ENCODE measurements at regions of chr12 and their contacts with region 1.

Region 1: GRCh38 chr12:89162704-89163261 is 189.5 kb downstream of the DUSP6 start:
- DNase-seq: peak; percentile 55
- H3K4me3 Mint-ChIP-seq: no peak overlapping the region
- H3K27ac Mint-ChIP-seq: no peak overlapping the region
- H3K4me1 Mint-ChIP-seq: peaks cover 27% of the 10 kb centered on the region
- H3K27me3 Mint-ChIP-seq: no peaks in the 10 kb centered on the region

Region 2: GRCh38 chr12:88035271-88035906 is 1127.4 kb before region 1 on chr12:
- intact Hi-C with region 1: loop called (anchors 10 kb)
- DNase-seq: peak; percentile 84
- H3K4me3 Mint-ChIP-seq: peak overlapping the region; percentile 99
- H3K27ac Mint-ChIP-seq: peak overlapping the region; percentile 95
- H3K4me1 Mint-ChIP-seq: peaks cover 45% of the 10 kb centered on the region
- H3K27me3 Mint-ChIP-seq: no peaks in the 10 kb centered on the region

Region 3: DNA sequence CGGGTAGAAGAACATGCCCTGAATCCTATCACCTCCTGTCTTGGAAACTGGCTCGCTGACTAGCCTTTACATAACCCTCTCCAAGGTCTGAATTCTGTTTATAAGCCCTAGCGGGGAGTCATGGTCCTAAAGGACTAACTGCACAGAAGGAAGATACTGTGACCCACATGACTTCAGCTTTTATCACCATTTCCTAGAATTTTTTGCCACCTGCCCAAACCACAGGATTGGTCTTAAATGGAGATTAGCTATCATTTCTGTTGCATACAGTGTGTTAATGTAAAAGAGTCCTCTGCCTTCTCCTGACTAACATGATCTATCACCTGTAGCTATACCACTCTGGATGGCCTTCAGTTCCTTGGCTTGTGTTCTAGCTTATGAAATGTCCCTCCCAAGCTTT is 129.7 kb before region 1 on chr12:
- intact Hi-C with region 1: no loop called
- DNase-seq: no peak
- H3K4me3 Mint-ChIP-seq: no peak overlapping the region
- H3K27ac Mint-ChIP-seq: no peak overlapping the region
- H3K4me1 Mint-ChIP-seq: peaks cover 55% of the 10 kb centered on the region
- H3K27me3 Mint-ChIP-seq: no peaks in the 10 kb centered on the region

Region 4: DNA sequence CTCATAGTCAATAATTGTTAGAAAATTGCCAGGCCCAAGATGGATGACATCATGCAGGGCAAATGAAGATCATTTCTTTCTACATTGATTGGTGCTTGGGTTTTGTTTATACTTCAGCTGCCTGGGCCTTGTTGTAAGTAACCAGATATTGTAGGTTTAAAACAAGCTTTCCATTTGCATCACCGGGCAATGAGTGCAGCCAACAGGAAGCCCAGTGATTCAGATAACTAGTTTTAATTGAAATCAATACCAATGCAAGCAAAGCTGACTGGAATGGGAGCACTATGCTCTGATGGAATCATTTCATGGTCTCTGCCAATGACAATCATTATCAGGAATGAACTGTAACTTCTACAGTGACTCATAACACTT is 89.8 kb before region 1 on chr12:
- intact Hi-C with region 1: loop called (anchors 2 kb)
- DNase-seq: no peak
- H3K4me3 Mint-ChIP-seq: no peak overlapping the region
- H3K27ac Mint-ChIP-seq: peak overlapping the region; percentile 44
- H3K4me1 Mint-ChIP-seq: peaks cover 29% of the 10 kb centered on the region
- H3K27me3 Mint-ChIP-seq: no peaks in the 10 kb centered on the region

Region 5: GRCh38 chr12:89225808-89226411 is 63.1 kb after region 1 on chr12:
- intact Hi-C with region 1: loop called (anchors 1 kb)
- DNase-seq: no peak
- H3K4me3 Mint-ChIP-seq: peak overlapping the region; percentile 70
- H3K27ac Mint-ChIP-seq: peak overlapping the region; percentile 100
- H3K4me1 Mint-ChIP-seq: peaks cover 67% of the 10 kb centered on the region
- H3K27me3 Mint-ChIP-seq: no peaks in the 10 kb centered on the region

Region 6: GRCh38 chr12:89333564-89334252 is 170.9 kb after region 1 on chr12:
- intact Hi-C with region 1: loop called (anchors 5 kb)
- DNase-seq: peak; percentile 47
- H3K4me3 Mint-ChIP-seq: peak overlapping the region; percentile 54
- H3K27ac Mint-ChIP-seq: peak overlapping the region; percentile 83
- H3K4me1 Mint-ChIP-seq: peaks cover 41% of the 10 kb centered on the region
- H3K27me3 Mint-ChIP-seq: no peaks in the 10 kb centered on the region

Region 7: DNA sequence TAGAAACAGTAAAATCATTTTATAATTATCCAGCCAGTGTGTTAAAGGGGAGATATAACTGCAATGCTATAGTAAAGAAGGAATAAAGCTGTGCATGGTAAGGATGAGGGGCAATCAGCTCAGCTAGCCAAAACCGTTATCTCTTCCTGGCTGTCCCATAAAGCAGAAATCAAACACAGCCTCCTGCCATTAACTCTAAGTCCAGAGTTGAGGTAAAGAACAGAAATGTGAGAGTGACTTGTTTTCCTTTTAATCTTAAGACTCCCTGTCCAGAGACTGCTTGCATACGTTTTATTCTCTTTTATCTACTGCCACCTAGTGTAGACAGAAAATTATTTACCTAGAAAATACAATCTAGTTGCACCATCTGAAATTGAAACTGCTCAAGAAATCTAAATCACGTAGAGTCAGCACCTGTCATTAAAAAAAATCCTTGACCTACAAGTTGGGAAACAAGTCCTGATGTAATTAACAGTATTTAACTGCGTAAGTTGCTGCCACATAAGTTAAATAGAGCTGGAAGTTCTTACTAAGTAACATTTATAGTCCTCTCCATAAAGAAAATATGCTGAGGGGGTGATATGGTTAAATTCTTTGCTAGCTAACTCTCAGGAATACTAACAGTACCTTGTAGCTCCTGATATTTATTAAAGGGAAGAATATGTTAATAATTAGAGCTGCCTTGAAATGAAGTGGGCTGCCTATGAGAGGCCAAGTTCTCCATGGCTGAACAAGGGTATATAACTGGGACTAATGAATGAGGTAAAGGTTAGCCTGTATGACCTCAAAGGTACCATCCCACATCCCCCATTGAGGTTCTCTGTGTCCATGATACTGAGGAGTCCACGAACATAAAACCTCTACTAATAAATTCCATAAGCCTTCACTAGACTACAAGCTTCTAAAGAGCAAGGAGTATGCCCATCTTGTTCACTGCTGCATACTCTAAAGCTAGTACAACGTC is 299.1 kb after region 1 on chr12:
- intact Hi-C with region 1: loop called (anchors 1 kb)
- DNase-seq: no peak
- H3K4me3 Mint-ChIP-seq: peak overlapping the region; percentile 60
- H3K27ac Mint-ChIP-seq: peak overlapping the region; percentile 66
- H3K4me1 Mint-ChIP-seq: peaks cover 55% of the 10 kb centered on the region
- H3K27me3 Mint-ChIP-seq: no peaks in the 10 kb centered on the region

Region 8: DNA sequence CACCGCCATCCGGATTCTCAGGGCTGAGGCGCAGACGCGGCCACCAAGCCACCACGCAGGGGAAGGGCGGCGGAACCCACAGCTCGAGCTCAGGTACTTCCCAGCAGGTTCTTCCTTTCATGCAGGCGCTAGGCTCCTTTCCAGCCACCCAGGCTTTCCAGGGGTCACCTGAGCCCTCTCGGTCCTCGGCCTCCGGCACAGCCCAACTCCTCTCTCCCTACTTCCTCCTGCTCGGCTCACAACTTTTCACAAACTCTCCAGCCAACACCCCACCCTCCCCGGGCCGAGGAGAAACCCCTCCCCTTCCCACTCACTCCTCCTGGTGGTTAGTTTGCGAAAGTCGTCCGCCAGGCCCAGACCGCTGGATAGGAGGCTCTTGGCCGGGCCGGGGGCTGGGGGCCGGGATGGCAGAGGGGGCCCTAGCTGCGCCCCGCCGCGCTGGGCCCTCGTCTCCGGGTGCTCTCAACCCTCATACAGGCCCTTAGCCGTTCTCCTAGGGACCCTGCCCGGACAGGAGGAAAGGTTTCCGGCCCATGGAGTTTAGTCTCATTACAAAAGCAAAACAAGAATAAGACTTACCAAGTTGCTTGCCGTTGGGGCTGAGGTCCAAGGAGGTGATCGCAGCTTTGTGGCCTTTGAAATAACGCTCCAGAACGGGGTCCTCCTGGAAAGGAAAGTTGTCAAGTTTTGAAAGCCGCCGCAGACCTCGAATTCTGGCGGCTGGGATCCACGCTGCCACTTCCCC is 361.9 kb after region 1 on chr12 and contains the start of gene GALNT4:
- intact Hi-C with region 1: loop called (anchors 2 kb)
- DNase-seq: peak; percentile 75
- H3K4me3 Mint-ChIP-seq: peak within 1 kb of the TSS; percentile 99
- H3K27ac Mint-ChIP-seq: peak within 1 kb of the TSS; percentile 99
- H3K4me1 Mint-ChIP-seq: peaks cover 51% of the 10 kb centered on the region
- H3K27me3 Mint-ChIP-seq: no peaks in the 10 kb centered on the region
- total RNA-seq, gene GALNT4: 8.8 and 9.1 TPM in 2 replicates